ENCODE measurements at regions of chrX and their contacts with region 1.

Region 1: DNA sequence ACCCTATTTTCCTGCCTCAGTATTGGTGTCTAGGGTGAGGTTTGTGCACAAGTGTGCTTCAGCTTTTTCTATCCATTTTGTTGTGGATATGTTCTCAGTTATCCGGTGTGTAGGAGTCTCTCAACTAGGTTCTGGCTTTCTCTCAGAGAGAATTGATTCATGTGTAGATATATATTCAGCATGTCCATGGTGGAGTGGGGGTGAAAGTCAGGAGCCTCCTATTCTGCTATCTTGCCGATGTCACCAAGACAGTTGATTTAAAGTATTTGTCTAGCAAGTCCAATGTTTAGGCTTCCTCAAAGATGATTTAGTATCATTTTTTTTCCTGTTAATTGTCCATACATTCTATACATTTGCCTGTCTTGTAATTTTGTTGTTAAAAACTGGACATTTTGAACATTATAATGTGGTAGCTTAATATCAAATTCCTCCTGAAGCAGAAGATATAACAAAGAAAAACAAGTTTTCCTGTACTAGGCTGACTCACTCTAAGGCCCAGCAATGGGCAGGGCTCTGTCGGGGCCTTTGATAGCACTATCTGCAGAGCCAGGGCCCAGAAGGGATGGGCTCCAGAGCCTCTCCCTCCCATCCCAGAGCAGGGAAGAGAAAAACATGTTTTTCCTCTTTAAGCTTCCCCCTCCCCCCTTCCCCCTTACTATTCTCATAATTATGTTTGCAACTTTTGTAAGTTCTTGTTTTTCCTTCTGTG is 37.6 kb downstream of the GLUD2 start:
- DNase-seq: peak; percentile 42
- ATAC-seq: peak; percentile 87
- H3K4me3 ChIP-seq: peak overlapping the region in 1 of 3 experiments; percentile 16; a peak in 1 of 6 replicates
- H3K27ac ChIP-seq: peak overlapping the region; percentile 67
- H3K4me1 ChIP-seq: peaks cover 45% of the 10 kb centered on the region
- H3K27me3 ChIP-seq: no peaks in the 10 kb centered on the region
- CTCF ChIP-seq: no peak
- EP300 ChIP-seq: no peak
- POLR2A ChIP-seq: no peak
- RAD21 ChIP-seq: no peak

Region 2: GRCh38 chrX:121010218-121010617 is 74.8 kb before region 1 on chrX:
- CTCF ChIA-PET with region 1: no interaction called
- POLR2A ChIA-PET with region 1: interaction called, 21 read pairs
- in situ Hi-C with region 1: no loop called
- intact Hi-C with region 1: loop called (anchors 2 kb)
- DNase-seq: peak; percentile 59
- ATAC-seq: no peak
- H3K4me3 ChIP-seq: no peak overlapping the region
- H3K27ac ChIP-seq: peak overlapping the region; percentile 81
- H3K4me1 ChIP-seq: peaks cover 63% of the 10 kb centered on the region
- H3K27me3 ChIP-seq: no peaks in the 10 kb centered on the region
- CTCF ChIP-seq: no peak
- EP300 ChIP-seq: no peak
- POLR2A ChIP-seq: no peak
- RAD21 ChIP-seq: no peak

Region 3: DNA sequence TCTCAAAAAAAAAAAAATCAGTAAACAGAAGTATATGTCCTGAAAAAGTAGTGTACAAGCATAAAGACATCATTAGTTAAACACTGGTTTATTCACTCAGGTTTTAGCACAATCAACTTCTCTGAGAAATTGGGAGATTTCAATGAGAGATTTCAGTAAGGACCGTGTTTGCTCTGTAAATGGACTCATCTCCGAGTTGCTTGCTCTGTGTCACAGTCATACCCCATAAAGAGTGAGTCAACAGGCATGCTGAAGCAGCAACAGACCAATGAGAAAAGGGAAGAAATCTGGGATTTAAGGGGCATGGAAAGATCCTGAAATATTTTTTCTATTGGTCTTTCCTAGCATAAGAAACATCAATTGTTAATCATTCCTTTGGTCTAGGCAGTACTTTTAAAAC is 32.9 kb before region 1 on chrX:
- CTCF ChIA-PET with region 1: no interaction called
- POLR2A ChIA-PET with region 1: no interaction called
- in situ Hi-C with region 1: no loop called
- intact Hi-C with region 1: loop called (anchors 5 kb)
- DNase-seq: peak; percentile 11
- ATAC-seq: peak; percentile 45; the same call in 1 of the 3 replicates
- H3K4me3 ChIP-seq: no peak overlapping the region
- H3K27ac ChIP-seq: no peak overlapping the region
- H3K4me1 ChIP-seq: no peaks in the 10 kb centered on the region
- H3K27me3 ChIP-seq: no peaks in the 10 kb centered on the region
- CTCF ChIP-seq: no peak
- EP300 ChIP-seq: no peak
- POLR2A ChIP-seq: no peak
- RAD21 ChIP-seq: no peak

Region 4: GRCh38 chrX:121135488-121136207 is 50.6 kb after region 1 on chrX:
- CTCF ChIA-PET with region 1: no interaction called
- POLR2A ChIA-PET with region 1: no interaction called
- in situ Hi-C with region 1: no loop called
- intact Hi-C with region 1: no loop called
- DNase-seq: no peak
- ATAC-seq: peak; percentile 74
- H3K4me3 ChIP-seq: no peak overlapping the region
- H3K27ac ChIP-seq: no peak overlapping the region
- H3K4me1 ChIP-seq: peaks cover 17% of the 10 kb centered on the region; the same call in 1 of the 2 replicates
- H3K27me3 ChIP-seq: no peaks in the 10 kb centered on the region
- CTCF ChIP-seq: no peak
- EP300 ChIP-seq: no peak
- POLR2A ChIP-seq: no peak
- RAD21 ChIP-seq: no peak

Measured in HepG2 (cell line).